Psoas muscle (tissue), 8 donors: ENCODE measurements at regions of chr2 and their contacts with region 1.

Region 1: DNA sequence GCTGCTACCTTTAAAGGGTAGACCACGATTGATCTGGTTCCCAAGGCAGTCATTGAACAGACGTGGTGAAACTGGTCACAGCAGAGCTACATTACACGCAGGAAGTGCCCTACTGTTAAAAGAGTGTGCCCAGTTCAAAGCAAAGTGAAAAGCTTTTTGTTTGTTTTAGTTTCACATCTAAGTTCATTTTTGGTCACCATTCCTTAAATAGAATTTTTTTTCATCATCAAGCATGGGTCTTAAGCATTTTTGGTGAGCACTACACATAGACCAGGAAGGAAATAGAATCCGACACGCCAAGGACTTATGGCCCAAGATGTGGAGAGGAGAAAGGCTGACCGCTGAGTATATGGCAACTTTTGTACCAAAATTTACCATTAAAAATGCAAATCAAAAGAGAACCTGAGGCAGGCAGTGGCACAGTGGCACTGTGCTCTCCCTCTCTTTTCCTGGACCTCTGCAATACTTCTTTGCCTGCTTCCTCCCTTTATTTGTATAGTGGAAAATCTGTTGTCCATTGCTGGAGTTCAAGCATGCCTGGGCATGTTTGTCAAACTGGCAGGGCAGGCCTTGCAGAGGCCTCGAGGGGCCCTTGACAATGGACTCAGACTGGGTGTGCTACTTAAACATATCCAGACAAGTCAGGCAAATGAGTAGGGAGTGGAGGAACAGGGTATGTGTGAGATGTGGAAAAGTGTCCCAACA is 42.6 kb upstream of the HNRNPA3 start:
- DNase-seq: no peak
- ATAC-seq: no peak
- H3K4me3 ChIP-seq: no peak overlapping the region
- H3K27ac ChIP-seq: no peak overlapping the region
- H3K4me1 ChIP-seq: peaks cover 37% of the 10 kb centered on the region
- H3K27me3 ChIP-seq: no peaks in the 10 kb centered on the region
- CTCF ChIP-seq: no peak

Region 2: GRCh38 chr2:177204417-177204816 is 34.5 kb after region 1 on chr2:
- intact Hi-C with region 1: loop called in 1 of 2 experiments (anchors 2 kb)
- DNase-seq: no peak
- ATAC-seq: no peak
- H3K4me3 ChIP-seq: no peak overlapping the region
- H3K27ac ChIP-seq: no peak overlapping the region
- H3K4me1 ChIP-seq: no peaks in the 10 kb centered on the region
- H3K27me3 ChIP-seq: no peaks in the 10 kb centered on the region
- CTCF ChIP-seq: no peak